ENCODE measurements at regions of chr12 and their contacts with region 1.

Region 1: DNA sequence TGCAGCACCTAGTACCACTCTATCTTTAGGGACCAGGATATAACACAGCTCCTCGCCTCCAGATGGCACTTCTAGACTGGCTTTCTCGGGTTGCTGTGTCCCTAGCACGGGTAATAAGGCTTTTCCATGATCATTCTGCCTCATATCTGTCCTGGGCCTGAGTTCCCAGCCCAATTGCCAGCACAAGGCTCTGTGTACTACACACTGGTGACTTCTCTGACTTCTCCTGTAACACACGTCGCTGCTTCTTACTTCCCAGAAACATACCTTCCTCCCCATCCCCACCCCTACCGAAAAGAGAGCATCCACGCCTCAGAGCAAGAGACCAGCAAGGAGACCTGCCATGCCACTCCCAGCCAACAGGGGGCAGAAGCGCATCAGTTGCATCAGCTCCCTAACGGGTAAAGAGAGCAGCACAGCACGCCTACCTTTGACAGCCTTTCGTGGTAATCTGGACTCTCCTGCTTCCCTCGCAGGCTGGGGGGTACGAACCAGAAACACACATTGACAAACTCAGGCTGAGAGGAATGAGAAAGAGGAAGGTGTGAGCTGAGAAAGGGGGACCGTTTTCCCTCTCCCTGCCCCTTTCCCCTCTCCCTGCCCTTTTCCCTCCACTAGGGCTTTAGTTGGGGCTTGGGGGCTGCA is 21.2 kb upstream of the ZNF740 start:
- DNase-seq: peak; percentile 97
- ATAC-seq: peak; percentile 100
- H3K4me3 Mint-ChIP-seq: peak overlapping the region; percentile 11
- H3K27ac Mint-ChIP-seq: peak overlapping the region; percentile 62
- H3K4me1 Mint-ChIP-seq: peaks cover 10% of the 10 kb centered on the region
- H3K27me3 Mint-ChIP-seq: no peaks in the 10 kb centered on the region
- CTCF ChIP-seq: peak; percentile 96

Region 2: GRCh38 chr12:52715416-52715815 is 443.9 kb before region 1 on chr12:
- CTCF ChIA-PET with region 1: no interaction called
- POLR2A ChIA-PET with region 1: no interaction called
- intact Hi-C with region 1: no loop called
- DNase-seq: peak; percentile 4
- ATAC-seq: no peak
- H3K4me3 Mint-ChIP-seq: no peak overlapping the region
- H3K27ac Mint-ChIP-seq: no peak overlapping the region
- H3K4me1 Mint-ChIP-seq: peaks cover 7% of the 10 kb centered on the region
- H3K27me3 Mint-ChIP-seq: peaks cover 26% of the 10 kb centered on the region
- CTCF ChIP-seq: no peak

Region 3: DNA sequence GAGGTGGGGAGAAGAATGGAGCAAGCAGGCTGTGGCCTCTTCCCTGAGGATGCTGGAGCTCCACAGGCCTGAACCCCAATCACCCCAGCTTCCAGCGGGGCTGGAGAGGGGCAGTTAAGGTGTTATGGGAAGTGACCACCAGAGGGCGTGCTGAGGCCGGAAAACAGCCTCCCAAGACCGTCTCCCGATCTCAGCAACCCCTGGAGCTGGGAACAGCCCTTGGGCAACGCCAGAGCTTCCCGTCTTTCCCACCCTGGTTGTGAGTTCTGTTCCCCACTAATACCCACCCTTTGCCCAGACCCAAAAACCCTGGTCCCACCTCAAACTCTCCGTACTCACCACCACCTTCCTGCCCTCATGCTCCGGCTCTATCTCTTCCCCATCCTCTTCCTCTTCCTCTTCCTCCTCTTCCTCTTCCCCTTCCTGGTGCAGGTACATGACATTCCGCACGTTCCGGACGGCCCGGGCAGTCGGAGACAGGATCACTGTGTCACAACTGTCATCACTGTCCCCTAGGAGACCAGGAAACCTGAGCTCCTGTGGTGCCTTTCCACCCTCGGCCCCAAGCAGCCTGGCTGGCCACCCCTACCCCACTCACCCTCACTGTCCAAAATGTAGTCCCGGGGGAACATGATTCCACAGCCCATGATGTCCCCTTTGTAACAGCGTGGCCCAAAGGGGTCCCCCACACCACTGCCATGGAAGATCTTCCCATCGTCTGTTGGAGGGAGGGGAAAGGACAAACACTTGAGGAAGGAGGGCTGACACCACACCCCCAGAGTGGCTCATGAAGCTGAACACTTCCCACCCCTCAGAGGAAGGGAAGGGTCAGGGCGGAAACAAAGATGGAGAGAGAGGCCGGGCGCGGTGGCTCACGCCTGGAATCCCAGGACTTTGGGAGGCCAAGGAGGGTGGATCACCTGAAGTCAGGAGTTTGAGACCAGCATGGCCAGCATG is 93.1 kb before region 1 on chr12:
- CTCF ChIA-PET with region 1: interaction called, 34 read pairs
- POLR2A ChIA-PET with region 1: interaction called, 3 read pairs
- intact Hi-C with region 1: no loop called
- DNase-seq: peak; percentile 80
- ATAC-seq: peak; percentile 66
- H3K4me3 Mint-ChIP-seq: no peak overlapping the region
- H3K27ac Mint-ChIP-seq: peak overlapping the region; percentile 40
- H3K4me1 Mint-ChIP-seq: peaks cover 12% of the 10 kb centered on the region
- H3K27me3 Mint-ChIP-seq: no peaks in the 10 kb centered on the region
- CTCF ChIP-seq: peak; percentile 96

Region 4: GRCh38 chr12:53171725-53172329 is 12.5 kb after region 1 on chr12:
- CTCF ChIA-PET with region 1: interaction called, 199 read pairs
- POLR2A ChIA-PET with region 1: interaction called, 5 read pairs
- intact Hi-C with region 1: no loop called
- DNase-seq: no peak
- ATAC-seq: no peak
- H3K4me3 Mint-ChIP-seq: no peak overlapping the region
- H3K27ac Mint-ChIP-seq: no peak overlapping the region
- H3K4me1 Mint-ChIP-seq: peaks cover 4% of the 10 kb centered on the region
- H3K27me3 Mint-ChIP-seq: no peaks in the 10 kb centered on the region
- CTCF ChIP-seq: no peak

Region 5: DNA sequence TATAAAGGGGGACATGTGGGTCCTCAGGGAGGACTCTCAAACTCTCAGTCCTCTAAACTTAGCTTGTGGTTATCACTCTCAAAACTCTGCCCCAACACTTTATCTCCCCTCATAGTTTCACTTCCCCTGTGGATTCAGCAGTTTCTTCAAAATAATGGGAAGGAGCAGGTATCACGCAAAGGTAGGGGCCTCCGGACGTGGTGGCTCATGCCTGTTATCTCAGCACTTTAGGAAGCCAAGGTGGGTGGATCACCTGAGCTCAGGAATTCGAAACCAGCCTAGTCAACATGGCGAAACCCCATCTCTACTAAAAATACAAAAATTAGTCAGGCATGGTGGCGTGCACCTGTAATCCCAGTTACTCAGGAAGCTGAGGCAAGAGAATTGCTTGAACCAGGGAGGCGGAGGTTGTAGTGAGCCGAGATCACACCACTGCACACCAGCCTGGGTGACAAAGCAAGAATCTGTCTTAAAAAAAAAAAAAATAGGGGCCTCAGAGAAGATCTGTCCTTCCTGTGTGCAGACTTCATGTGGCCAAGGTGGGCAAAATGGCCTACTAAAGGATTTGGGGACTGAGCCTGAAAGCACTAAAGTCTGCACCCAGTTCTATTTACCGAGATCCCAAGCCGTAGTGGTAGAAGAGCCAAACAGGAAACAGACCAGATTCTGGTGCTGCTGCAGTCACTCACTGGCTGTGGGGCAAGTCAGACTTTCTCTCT is 41.3 kb after region 1 on chr12:
- CTCF ChIA-PET with region 1: interaction called, 41 read pairs
- POLR2A ChIA-PET with region 1: interaction called, 15 read pairs
- intact Hi-C with region 1: loop called (anchors 5 kb)
- DNase-seq: peak; percentile 64
- ATAC-seq: peak; percentile 41
- H3K4me3 Mint-ChIP-seq: peak overlapping the region; percentile 43
- H3K27ac Mint-ChIP-seq: peak overlapping the region; percentile 83
- H3K4me1 Mint-ChIP-seq: peaks cover 70% of the 10 kb centered on the region
- H3K27me3 Mint-ChIP-seq: no peaks in the 10 kb centered on the region
- CTCF ChIP-seq: no peak

Region 6: DNA sequence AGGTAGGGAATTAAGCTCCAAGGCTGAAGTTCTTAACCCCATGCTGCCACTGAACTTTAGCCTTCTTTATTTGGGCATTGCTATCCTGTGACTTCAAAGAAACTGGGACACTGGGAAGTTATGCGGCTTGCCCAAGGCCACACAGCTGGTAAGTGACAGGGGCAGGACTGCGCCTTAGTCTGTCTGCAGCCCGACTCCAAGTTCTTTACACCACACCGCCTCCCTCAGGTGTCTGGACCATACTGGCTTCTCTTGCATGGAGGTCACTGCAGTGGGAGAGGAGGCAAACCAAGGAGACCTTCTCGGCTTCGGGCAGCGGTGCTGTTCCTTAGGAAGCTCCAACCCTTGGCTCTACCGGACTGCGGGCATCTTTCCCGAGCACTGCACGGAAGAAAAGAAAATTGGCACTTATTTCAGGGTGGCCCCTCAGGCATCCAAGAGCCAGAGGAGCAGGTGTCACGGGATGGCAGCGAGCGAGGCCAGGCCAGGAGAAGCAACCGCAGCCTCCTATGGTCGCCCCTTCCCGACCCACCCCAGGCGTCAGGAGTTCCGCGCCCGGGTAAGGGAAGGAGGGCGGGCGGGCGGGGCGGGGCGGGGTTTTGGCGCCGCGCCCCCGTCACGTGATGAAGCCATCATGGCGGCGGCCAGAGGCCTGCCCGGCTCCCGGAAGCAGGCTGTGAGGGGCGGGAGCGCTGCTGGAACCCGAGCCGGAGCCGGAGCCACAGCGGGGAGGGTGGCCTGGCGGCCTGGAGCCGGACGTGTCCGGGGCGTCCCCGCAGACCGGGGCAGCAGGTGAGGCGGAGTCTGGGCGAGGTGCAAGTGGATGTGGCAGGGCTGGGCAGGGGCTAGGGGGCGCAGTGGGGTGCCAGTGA is 92.4 kb after region 1 on chr12:
- CTCF ChIA-PET with region 1: interaction called, 18 read pairs
- POLR2A ChIA-PET with region 1: no interaction called
- intact Hi-C with region 1: no loop called
- DNase-seq: peak; percentile 81
- ATAC-seq: peak; percentile 90
- H3K4me3 Mint-ChIP-seq: peak overlapping the region; percentile 83
- H3K27ac Mint-ChIP-seq: peak overlapping the region; percentile 95
- H3K4me1 Mint-ChIP-seq: peaks cover 39% of the 10 kb centered on the region
- H3K27me3 Mint-ChIP-seq: no peaks in the 10 kb centered on the region
- CTCF ChIP-seq: peak; percentile 47

Region 7: DNA sequence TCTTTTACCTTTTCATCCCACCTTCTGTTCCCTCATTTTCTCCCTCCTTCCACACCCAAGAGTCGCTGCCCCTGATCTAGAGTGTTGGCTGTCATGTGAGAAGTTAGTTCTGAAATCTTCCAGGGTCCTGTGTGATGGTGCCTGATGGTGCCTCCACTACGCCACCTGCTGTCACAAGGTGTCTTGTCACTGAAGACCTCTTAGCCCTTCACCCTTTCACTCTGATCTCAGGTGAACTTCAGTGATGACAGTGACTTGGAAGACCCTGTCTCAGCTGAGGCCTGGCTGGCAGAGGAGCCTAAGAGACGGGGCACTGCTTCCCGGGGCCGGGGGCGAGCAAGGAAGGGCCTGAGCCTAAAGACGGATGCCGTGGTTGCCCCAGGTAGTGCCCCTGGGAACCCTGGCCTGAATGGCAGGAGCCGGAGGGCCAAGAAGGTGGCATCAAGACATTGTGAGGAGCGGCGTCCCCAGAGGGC is 128.5 kb after region 1 on chr12:
- CTCF ChIA-PET with region 1: interaction called, 25 read pairs
- POLR2A ChIA-PET with region 1: no interaction called
- intact Hi-C with region 1: no loop called
- DNase-seq: peak; percentile 80
- ATAC-seq: peak; percentile 85
- H3K4me3 Mint-ChIP-seq: no peak overlapping the region
- H3K27ac Mint-ChIP-seq: no peak overlapping the region
- H3K4me1 Mint-ChIP-seq: peaks cover 17% of the 10 kb centered on the region
- H3K27me3 Mint-ChIP-seq: no peaks in the 10 kb centered on the region
- CTCF ChIP-seq: peak; percentile 57

Region 8: GRCh38 chr12:53344824-53345485 is 185.6 kb after region 1 on chr12:
- CTCF ChIA-PET with region 1: interaction called, 13 read pairs
- POLR2A ChIA-PET with region 1: no interaction called
- intact Hi-C with region 1: no loop called
- DNase-seq: peak; percentile 85
- ATAC-seq: peak; percentile 86
- H3K4me3 Mint-ChIP-seq: peak overlapping the region; percentile 82
- H3K27ac Mint-ChIP-seq: peak overlapping the region; percentile 71
- H3K4me1 Mint-ChIP-seq: peaks cover 19% of the 10 kb centered on the region
- H3K27me3 Mint-ChIP-seq: peaks cover 3% of the 10 kb centered on the region
- CTCF ChIP-seq: peak; percentile 75

Measured in activated CD8-positive, alpha-beta T cell treated with anti-CD3 and anti-CD28 coated beads for 36 hours (primary cell).